ENCODE measurements at regions of chr3 and their contacts with region 1.

Region 1: DNA sequence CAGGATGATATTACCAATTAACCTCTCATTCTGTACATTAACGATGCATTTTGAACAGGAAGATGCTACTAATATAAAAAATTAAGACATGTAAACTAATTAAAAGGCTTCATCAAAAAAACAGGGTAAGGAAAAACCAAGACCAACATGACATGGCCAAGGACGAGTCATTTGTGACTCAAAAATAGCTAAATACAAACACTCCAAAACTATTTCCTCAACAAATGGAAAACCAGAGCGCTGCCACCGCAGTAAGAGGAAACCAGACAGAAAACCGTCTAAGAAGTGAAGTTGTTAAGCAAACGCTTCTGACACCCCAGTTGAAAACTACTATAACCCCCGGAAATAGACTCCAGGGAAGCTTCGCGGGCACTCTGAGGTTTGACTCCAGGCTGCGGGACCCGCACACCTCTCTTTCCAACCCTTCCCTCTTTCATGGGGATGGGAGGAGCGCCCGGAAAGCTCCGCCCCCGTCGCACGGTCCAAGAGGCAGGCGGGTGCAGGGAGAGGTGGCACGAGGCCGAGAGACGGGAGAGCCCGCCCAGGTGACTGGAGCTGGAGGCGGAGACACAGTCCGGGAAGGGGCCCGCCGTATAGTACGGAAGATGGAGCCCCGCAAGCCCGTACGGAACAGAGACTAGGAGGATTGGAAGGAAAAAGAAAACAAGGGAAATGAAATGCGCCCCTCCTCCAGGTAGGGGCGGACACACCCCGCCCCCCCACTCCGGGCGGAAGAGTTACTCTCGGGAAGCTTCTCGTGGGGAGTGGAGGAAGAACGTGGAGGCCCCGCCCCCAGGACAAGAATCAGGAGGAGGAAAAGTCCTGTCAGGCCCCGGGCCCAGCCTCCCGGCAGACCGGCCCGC is 708 bp downstream of the DCAF1 start:
- DNase-seq: peak; percentile 96
- H3K4me3 ChIP-seq: peak overlapping the region; percentile 66 to 97 (median 94)
- H3K27ac ChIP-seq: peak overlapping the region; percentile 63
- H3K4me1 ChIP-seq: peaks cover 8% of the 10 kb centered on the region
- H3K27me3 ChIP-seq: no peaks in the 10 kb centered on the region
- CTCF ChIP-seq: no peak
- POLR2A ChIP-seq: peak; percentile 4

Region 2: GRCh38 chr3:51391075-51391567 is 108.0 kb before region 1 on chr3 and contains the start of gene RBM15B:
- CTCF ChIA-PET with region 1: interaction called, 10 read pairs
- POLR2A ChIA-PET with region 1: interaction called, 3 read pairs
- dilution Hi-C with region 1: no loop called
- intact Hi-C with region 1: loop called (anchors 1 kb)
- DNase-seq: peak; percentile 96
- H3K4me3 ChIP-seq: peak within 1 kb of the TSS; percentile 29 to 77 (median 36)
- H3K27ac ChIP-seq: peak within 1 kb of the TSS; percentile 50
- H3K4me1 ChIP-seq: peaks cover 49% of the 10 kb centered on the region
- H3K27me3 ChIP-seq: no peaks in the 10 kb centered on the region
- CTCF ChIP-seq: peak in 1 of 2 donors; percentile 91
- POLR2A ChIP-seq: peak; percentile 75
- total RNA-seq, gene RBM15B: 38.3 and 39.1 TPM in 2 replicates

Region 3: DNA sequence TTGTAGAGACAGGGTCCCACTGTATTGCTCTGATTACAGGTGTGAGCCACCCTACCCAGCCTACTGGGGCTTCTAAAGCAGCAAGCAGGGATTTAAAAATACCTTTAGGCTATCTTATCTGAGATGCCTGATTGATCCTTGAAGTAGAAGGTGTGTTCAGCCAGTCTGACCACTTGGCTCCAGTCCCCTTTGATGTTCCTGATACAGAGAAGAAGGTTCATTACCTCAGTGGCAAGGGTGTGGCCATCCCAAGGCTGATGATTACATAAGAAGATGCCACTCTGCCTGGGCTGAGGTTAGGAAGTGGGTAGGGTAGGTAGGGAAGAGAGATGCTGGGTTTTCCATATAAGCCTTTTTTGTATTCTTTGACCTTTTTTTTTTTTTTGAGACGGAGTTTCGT is 11.9 kb after region 1 on chr3:
- CTCF ChIA-PET with region 1: interaction called, 20 read pairs
- POLR2A ChIA-PET with region 1: interaction called, 5 read pairs
- dilution Hi-C with region 1: no loop called
- intact Hi-C with region 1: no loop called
- DNase-seq: no peak
- H3K4me3 ChIP-seq: no peak overlapping the region
- H3K27ac ChIP-seq: no peak overlapping the region
- H3K4me1 ChIP-seq: no peaks in the 10 kb centered on the region
- H3K27me3 ChIP-seq: no peaks in the 10 kb centered on the region
- CTCF ChIP-seq: no peak
- POLR2A ChIP-seq: no peak

Region 4: DNA sequence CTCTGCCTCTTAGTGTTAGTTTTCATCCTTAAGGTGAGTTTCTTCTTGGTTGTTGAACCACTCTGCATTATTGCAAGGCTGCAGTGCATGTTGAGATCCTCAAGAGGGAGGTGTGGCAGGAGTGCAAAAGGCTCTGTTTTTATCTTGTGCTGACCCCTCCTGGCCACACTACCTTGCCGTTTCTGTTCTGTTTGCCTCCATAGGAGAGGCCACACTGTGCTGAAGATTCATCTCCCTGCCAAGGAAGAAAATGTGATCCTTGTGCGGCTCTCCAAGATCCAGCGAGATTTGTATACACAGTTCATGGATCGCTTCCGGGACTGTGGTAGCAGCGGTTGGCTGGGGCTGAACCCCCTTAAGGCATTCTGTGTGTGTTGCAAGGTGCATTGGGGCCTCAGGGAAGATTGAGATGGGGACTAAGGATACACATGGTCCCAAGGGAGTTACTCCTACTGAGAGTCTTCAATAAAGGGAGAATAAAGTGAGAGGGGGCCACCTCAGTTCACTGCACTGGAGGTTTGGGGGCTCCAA is 138.9 kb after region 1 on chr3:
- CTCF ChIA-PET with region 1: interaction called, 18 read pairs
- POLR2A ChIA-PET with region 1: interaction called, 11 read pairs
- dilution Hi-C with region 1: no loop called
- intact Hi-C with region 1: loop called (anchors 1 kb)
- DNase-seq: peak; percentile 64
- H3K4me3 ChIP-seq: no peak overlapping the region
- H3K27ac ChIP-seq: no peak overlapping the region
- H3K4me1 ChIP-seq: no peaks in the 10 kb centered on the region
- H3K27me3 ChIP-seq: no peaks in the 10 kb centered on the region
- CTCF ChIP-seq: peak; percentile 74 to 89
- POLR2A ChIP-seq: no peak

Region 5: DNA sequence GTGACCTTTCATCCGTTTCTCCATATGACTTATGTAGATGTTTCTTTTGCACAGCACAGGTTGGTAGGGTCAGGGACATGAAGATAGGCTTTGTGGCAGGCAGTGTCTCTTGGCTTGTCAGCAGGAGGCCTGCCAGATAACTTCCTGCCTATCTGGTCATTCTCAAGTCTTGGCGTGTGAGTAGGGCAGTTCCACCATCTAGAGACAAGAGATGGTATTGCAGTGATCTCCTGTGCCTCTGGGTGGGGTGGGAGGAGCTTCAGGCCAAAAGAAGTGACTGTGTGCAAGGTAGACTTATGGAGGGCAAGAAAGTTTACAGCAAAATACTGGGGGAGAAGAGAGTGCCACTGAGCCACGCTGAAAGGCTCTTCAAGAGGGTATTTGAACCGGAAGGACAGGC is 183.0 kb after region 1 on chr3:
- CTCF ChIA-PET with region 1: interaction called, 213 read pairs
- POLR2A ChIA-PET with region 1: no interaction called
- dilution Hi-C with region 1: no loop called
- intact Hi-C with region 1: loop called (anchors 1 kb)
- DNase-seq: peak; percentile 82
- H3K4me3 ChIP-seq: no peak overlapping the region
- H3K27ac ChIP-seq: no peak overlapping the region
- H3K4me1 ChIP-seq: peaks cover 19% of the 10 kb centered on the region
- H3K27me3 ChIP-seq: no peaks in the 10 kb centered on the region
- CTCF ChIP-seq: peak; percentile 64 to 67
- POLR2A ChIP-seq: no peak

Region 6: GRCh38 chr3:51941798-51942602 is 442.9 kb after region 1 on chr3 and contains the starts of genes PARP3 and RRP9:
- CTCF ChIA-PET with region 1: no interaction called
- POLR2A ChIA-PET with region 1: no interaction called
- dilution Hi-C with region 1: no loop called
- intact Hi-C with region 1: loop called (anchors 5 kb)
- DNase-seq: peak; percentile 100
- H3K4me3 ChIP-seq: peak within 1 kb of the TSS; percentile 66 to 81 (median 79)
- H3K27ac ChIP-seq: peak within 1 kb of the TSS; percentile 80
- H3K4me1 ChIP-seq: peaks cover 21% of the 10 kb centered on the region
- H3K27me3 ChIP-seq: no peaks in the 10 kb centered on the region
- CTCF ChIP-seq: peak; percentile 100
- POLR2A ChIP-seq: peak; percentile 73
- total RNA-seq, gene PARP3: 10.0 and 11.0 TPM in 2 replicates
- total RNA-seq, gene RRP9: 23.8 and 30.1 TPM in 2 replicates